ENCODE measurements at regions of chr14 and their contacts with region 1.

Region 1: GRCh38 chr14:23120541-23121251 is 1.6 kb upstream of the CEBPE start:
- DNase-seq: peak; percentile 90
- ATAC-seq: peak; percentile 88
- H3K4me3 Mint-ChIP-seq: no peak overlapping the region
- H3K27ac Mint-ChIP-seq: peak overlapping the region; percentile 84
- H3K4me1 Mint-ChIP-seq: peaks cover 43% of the 10 kb centered on the region
- H3K27me3 Mint-ChIP-seq: no peaks in the 10 kb centered on the region
- CTCF ChIP-seq: peak; percentile 100

Region 2: DNA sequence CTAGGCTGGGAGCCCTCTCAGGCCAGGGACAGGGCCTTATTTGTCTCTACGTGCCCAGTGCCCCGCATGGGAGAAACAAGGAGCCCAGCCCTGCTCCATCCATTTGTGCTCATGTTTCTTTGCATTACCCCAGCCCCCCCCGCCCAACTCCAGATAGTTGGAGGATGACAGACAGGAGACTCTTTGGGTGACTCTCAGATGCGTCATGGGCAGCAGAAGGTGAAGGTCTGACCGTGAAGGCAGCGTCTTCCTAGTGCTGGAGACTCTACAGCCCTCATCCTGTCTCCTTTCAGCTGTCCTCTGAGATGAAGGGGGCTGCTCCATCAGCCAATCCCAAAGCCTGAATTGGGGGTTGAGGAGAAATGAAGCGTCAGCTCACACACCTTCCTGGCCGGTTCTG is 79.0 kb before region 1 on chr14:
- CTCF ChIA-PET with region 1: no interaction called
- POLR2A ChIA-PET with region 1: no interaction called
- intact Hi-C with region 1: no loop called
- DNase-seq: no peak
- ATAC-seq: no peak
- H3K4me3 Mint-ChIP-seq: no peak overlapping the region
- H3K27ac Mint-ChIP-seq: no peak overlapping the region
- H3K4me1 Mint-ChIP-seq: peaks cover 1% of the 10 kb centered on the region
- H3K27me3 Mint-ChIP-seq: no peaks in the 10 kb centered on the region
- CTCF ChIP-seq: no peak

Region 3: GRCh38 chr14:23076785-23077408 is 43.8 kb before region 1 on chr14:
- CTCF ChIA-PET with region 1: interaction called, 32 read pairs
- POLR2A ChIA-PET with region 1: no interaction called
- intact Hi-C with region 1: no loop called
- DNase-seq: peak; percentile 39
- ATAC-seq: peak; percentile 70
- H3K4me3 Mint-ChIP-seq: no peak overlapping the region
- H3K27ac Mint-ChIP-seq: no peak overlapping the region
- H3K4me1 Mint-ChIP-seq: peaks cover 9% of the 10 kb centered on the region
- H3K27me3 Mint-ChIP-seq: no peaks in the 10 kb centered on the region
- CTCF ChIP-seq: peak; percentile 70

Region 4: GRCh38 chr14:23095196-23096108 is 25.2 kb before region 1 on chr14 and contains the start of gene C14orf119:
- CTCF ChIA-PET with region 1: interaction called, 32 read pairs
- POLR2A ChIA-PET with region 1: interaction called, 9 read pairs
- intact Hi-C with region 1: no loop called
- DNase-seq: peak; percentile 100
- ATAC-seq: peak; percentile 91
- H3K4me3 Mint-ChIP-seq: no peak within 1 kb of the TSS
- H3K27ac Mint-ChIP-seq: no peak within 1 kb of the TSS
- H3K4me1 Mint-ChIP-seq: peaks cover 34% of the 10 kb centered on the region
- H3K27me3 Mint-ChIP-seq: no peaks in the 10 kb centered on the region
- CTCF ChIP-seq: no peak
- total RNA-seq, gene C14orf119: 49.2 to 51.1 TPM

Region 5: GRCh38 chr14:23130871-23131270 is 10.2 kb after region 1 on chr14:
- CTCF ChIA-PET with region 1: interaction called, 21 read pairs
- POLR2A ChIA-PET with region 1: no interaction called
- intact Hi-C with region 1: no loop called
- DNase-seq: no peak
- ATAC-seq: no peak
- H3K4me3 Mint-ChIP-seq: no peak overlapping the region
- H3K27ac Mint-ChIP-seq: no peak overlapping the region
- H3K4me1 Mint-ChIP-seq: no peaks in the 10 kb centered on the region
- H3K27me3 Mint-ChIP-seq: no peaks in the 10 kb centered on the region
- CTCF ChIP-seq: no peak

Region 6: DNA sequence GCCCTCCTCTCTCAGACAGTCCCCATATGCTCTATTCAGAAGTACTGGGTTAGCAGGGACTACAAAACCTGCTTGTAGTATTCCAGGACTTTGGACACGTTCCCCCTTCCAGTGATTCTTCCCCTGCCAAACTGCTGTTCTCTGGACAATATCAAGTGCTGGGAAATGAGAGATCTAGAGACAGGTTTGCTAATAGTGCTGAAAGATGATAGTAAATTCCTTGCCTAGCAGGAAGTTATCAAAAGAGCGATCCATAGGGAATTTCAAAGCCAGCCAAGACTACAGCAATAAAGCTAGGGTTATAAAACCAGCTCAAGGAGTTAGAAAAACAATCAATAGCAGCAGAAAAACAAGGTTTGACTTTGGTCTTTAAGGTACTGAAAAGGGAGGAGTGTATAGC is 47.5 kb after region 1 on chr14:
- CTCF ChIA-PET with region 1: interaction called, 74 read pairs
- POLR2A ChIA-PET with region 1: no interaction called
- intact Hi-C with region 1: no loop called
- DNase-seq: no peak
- ATAC-seq: no peak
- H3K4me3 Mint-ChIP-seq: no peak overlapping the region
- H3K27ac Mint-ChIP-seq: no peak overlapping the region
- H3K4me1 Mint-ChIP-seq: peaks cover 16% of the 10 kb centered on the region
- H3K27me3 Mint-ChIP-seq: no peaks in the 10 kb centered on the region
- CTCF ChIP-seq: no peak

Region 7: GRCh38 chr14:23186913-23187654 is 66.4 kb after region 1 on chr14:
- CTCF ChIA-PET with region 1: interaction called, 290 read pairs
- POLR2A ChIA-PET with region 1: interaction called, 4 read pairs
- intact Hi-C with region 1: loop called (anchors 1 kb)
- DNase-seq: peak; percentile 55
- ATAC-seq: peak; percentile 62
- H3K4me3 Mint-ChIP-seq: no peak overlapping the region
- H3K27ac Mint-ChIP-seq: no peak overlapping the region
- H3K4me1 Mint-ChIP-seq: no peaks in the 10 kb centered on the region
- H3K27me3 Mint-ChIP-seq: no peaks in the 10 kb centered on the region
- CTCF ChIP-seq: peak; percentile 80

Region 8: DNA sequence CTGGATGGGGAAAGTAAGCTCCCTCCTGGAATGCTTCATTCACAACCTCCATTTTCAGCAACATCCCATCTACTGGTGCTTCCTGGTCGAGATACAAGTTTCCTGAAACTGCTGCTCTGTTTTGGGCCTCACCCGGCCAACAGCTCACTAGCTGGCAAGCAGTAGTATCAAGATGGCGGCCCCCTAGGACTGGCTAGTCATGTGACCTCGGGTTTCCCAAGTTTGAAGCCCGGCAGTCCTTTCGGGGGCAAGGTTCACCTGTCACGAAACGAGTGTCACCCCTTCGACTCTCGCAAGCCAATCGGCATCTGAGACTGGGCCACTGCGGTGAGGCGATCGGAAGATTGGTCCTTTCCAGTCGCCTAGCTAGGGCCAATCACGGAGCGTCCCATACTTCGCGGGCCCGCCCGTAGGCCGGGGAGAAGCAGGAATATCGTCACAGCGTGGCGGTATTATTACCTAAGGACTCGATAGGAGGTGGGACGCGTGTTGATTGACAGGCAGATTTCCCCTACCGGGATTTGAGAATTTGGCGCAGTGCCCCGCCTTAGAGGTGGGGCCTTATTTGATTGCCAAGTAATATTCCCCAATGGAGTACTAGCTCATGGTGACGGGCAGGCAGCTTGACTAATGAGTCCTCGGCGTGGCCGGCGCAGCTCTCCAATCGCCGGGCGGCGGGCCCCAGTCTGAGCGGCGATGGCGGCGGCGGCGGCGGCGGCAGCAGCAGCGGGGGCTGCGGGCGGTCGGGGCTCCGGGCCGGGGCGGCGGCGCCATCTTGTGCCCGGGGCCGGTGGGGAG is 200.3 kb after region 1 on chr14 and contains the start of gene PABPN1:
- CTCF ChIA-PET with region 1: interaction called, 28 read pairs
- POLR2A ChIA-PET with region 1: interaction called, 3 read pairs
- intact Hi-C with region 1: no loop called
- DNase-seq: peak; percentile 99
- ATAC-seq: peak; percentile 88
- H3K4me3 Mint-ChIP-seq: peak within 1 kb of the TSS; percentile 95
- H3K27ac Mint-ChIP-seq: peak within 1 kb of the TSS; percentile 95
- H3K4me1 Mint-ChIP-seq: peaks cover 22% of the 10 kb centered on the region
- H3K27me3 Mint-ChIP-seq: no peaks in the 10 kb centered on the region
- CTCF ChIP-seq: no peak
- total RNA-seq, gene PABPN1: 258 to 260 TPM

Measured in activated CD8-positive, alpha-beta T cell treated with anti-CD3 and anti-CD28 coated beads for 36 hours (primary cell).